HEK293 (cell line): ENCODE measurements at regions of chr12 and their contacts with region 1.

Region 1: GRCh38 chr12:63151623-63152320 is 771 bp upstream of the AVPR1A start:
- H3K4me3 ChIP-seq: peak overlapping the region; percentile 51
- H3K27ac ChIP-seq: no peak overlapping the region; the same call in 1 of the 2 replicates
- H3K4me1 ChIP-seq: no peaks in the 10 kb centered on the region
- CTCF ChIP-seq: peak; percentile 72

Region 2: DNA sequence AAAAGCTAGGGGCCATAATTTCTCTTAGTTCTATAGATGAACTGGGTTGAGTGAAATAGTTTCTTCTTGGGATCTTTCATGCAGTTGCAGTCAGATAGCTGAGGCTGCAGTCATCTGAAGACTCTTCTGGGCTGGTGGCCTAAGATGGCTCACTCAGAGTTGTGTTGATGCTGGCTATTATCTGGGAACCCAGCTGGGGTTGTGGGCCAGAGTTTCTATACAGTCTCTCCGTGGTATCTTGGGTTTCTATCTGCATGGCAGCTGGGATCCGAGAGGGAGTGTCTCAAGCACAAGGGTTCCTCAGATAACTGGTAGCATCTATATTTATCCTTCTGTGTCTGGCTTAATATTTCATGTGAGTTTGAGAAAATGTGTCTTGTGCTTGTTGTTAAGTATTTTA is 21.8 kb before region 1 on chr12:
- CTCF ChIA-PET with region 1: interaction called, 14 read pairs
- POLR2A ChIA-PET with region 1: no interaction called
- H3K4me3 ChIP-seq: no peak overlapping the region
- H3K27ac ChIP-seq: no peak overlapping the region
- H3K4me1 ChIP-seq: no peaks in the 10 kb centered on the region
- CTCF ChIP-seq: no peak

Region 3: DNA sequence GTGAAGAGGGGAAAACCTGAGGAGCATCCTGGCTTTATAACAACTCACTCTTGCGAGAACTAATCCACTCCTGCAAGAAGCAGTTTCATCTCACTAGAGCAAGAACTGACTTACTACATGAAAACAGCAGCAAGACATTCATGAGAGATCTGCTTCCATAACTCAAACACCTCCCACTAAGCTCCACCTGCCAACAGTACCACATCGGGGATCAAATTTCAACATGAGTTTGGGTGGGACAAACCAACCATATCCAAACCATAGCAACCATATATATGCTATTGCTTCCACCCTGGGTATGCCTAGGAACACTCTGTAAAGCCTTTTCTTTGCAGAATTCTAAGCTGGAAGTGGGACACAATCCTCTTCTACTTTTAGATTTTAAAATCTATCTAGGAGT is 13.1 kb after region 1 on chr12:
- CTCF ChIA-PET with region 1: interaction called, 17 read pairs
- POLR2A ChIA-PET with region 1: no interaction called
- H3K4me3 ChIP-seq: no peak overlapping the region
- H3K27ac ChIP-seq: no peak overlapping the region
- H3K4me1 ChIP-seq: no peaks in the 10 kb centered on the region
- CTCF ChIP-seq: no peak

Region 4: GRCh38 chr12:63276537-63277365 is 125.0 kb after region 1 on chr12:
- CTCF ChIA-PET with region 1: interaction called, 15 read pairs
- POLR2A ChIA-PET with region 1: no interaction called
- H3K4me3 ChIP-seq: no peak overlapping the region
- H3K27ac ChIP-seq: no peak overlapping the region
- H3K4me1 ChIP-seq: no peaks in the 10 kb centered on the region
- CTCF ChIP-seq: 0 out of 2 replicates have a peak, but pooled peaks have one; percentile 17